Aorta (tissue), 5 donors: ENCODE measurements at regions of chr16 and their contacts with region 1.

Region 1: DNA sequence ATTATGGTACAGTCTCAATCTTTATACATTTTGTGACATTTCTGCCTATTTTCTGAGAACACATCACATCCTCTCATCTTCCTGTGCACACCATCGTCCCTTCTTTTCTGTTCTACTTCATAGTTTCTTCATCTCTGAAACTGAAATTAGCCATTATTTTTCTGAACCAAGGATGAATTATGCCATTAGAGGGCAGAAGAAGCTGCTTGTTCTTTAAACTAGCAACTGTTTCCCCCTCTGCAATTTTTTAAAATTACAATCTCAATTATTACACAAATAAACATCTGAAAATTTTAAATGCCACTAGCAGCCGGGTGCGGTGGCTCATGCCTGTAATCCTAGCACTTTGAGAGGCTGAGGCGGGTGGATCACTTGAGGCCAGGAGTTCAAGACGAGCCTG is 41.3 kb downstream of the RBBP6 start:
- DNase-seq: no peak
- ATAC-seq: no peak
- H3K4me3 ChIP-seq: no peak overlapping the region
- H3K27ac ChIP-seq: no peak overlapping the region
- H3K4me1 ChIP-seq: no peaks in the 10 kb centered on the region
- H3K27me3 ChIP-seq: no peaks in the 10 kb centered on the region

Region 2: DNA sequence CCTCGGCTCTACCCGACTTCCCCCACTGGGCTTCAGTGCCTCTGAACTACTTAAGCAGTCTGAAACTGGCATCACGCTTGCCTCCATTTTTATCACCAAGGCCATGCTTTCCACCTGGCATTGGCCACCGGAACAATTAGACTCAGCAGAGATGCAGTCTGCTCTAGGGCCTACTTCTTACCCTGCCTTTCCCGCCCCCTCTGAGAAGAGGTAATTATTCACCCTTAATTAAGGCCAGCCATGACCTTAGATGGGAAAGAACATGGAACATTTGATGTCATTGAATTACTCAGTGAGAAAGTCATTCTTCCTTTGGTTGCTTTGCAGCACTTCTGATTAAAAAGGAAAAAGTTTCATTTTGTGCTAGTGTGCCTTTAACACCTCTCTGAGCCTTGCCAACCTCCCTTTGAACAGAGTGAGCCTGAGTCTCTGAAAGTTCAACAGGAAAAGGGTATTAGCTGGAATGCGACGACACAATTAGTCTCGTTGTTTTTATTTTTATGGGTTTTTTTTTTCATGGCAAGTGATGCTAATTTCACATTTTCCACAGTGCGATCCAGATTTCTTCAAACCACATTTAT is 87.9 kb after region 1 on chr16:
- intact Hi-C with region 1: no loop called
- DNase-seq: peak; percentile 74 to 82
- ATAC-seq: peak; percentile 80
- H3K4me3 ChIP-seq: no peak overlapping the region
- H3K27ac ChIP-seq: peak overlapping the region; percentile 85 to 93
- H3K4me1 ChIP-seq: peaks cover 0 to 2% of the 10 kb centered on the region in 2 donors
- H3K27me3 ChIP-seq: no peaks in the 10 kb centered on the region

Region 3: DNA sequence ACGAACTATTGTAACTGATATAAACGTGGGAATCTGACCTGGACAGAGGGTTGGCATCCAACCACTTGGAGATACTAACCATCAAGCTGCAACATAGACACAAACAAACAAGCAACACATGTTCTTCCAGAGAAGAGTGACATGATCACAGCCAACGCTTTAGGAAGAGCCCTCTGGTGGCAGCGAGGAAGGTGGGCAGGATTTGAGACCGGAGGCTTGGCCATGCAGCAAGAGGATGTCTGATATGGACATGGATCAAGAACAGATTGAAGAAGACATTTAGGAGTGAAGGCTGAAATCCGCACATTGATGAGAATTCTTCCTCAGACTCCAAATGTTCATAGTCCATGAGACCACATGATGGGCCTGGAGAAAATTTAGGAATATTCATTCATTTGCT is 108.5 kb after region 1 on chr16:
- intact Hi-C with region 1: loop called in 1 of 2 experiments (anchors 5 kb)
- DNase-seq: no peak
- ATAC-seq: no peak
- H3K4me3 ChIP-seq: no peak overlapping the region
- H3K27ac ChIP-seq: no peak overlapping the region
- H3K4me1 ChIP-seq: peaks cover 0 to 2% of the 10 kb centered on the region in 2 donors
- H3K27me3 ChIP-seq: no peaks in the 10 kb centered on the region

Region 4: DNA sequence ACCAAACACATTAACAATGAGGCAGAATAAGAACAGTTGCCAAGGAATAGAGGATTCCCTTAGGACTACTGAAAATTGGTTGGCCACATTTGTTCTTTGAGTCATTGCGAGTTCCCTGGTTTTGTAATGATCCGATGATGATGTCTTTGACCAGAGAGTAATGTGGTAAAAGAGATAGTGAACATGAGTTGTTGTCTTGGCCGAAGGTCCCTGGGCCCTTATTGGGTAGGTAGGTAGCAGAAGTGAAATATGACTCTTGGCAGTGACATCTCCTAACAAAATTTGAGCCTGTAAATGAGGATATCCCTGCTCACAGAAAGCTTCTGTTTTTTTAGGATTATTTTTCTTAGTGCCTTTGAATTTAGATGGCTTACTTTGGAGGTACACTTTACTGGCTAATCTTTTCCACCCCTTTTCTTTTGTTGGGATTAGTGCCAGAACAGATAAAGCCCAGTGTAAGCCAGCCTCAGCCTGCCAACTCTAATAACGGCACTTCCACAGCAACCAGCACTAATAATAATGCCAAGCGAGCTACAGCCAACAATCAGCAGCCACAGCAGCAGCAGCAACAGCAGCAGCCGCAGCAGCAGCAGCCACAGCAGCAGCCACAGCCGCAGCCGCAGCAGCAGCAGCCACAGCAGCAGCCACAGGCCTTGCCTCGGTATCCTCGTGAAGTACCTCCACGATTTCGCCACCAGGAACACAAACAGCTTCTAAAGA is 196.0 kb after region 1 on chr16:
- intact Hi-C with region 1: loop called in 1 of 2 experiments (anchors 5 kb)
- DNase-seq: peak in 1 of 2 donors; percentile 55
- ATAC-seq: peak; percentile 78
- H3K4me3 ChIP-seq: no peak overlapping the region
- H3K27ac ChIP-seq: peak overlapping the region; percentile 39 to 77
- H3K4me1 ChIP-seq: peaks cover 2 to 26% of the 10 kb centered on the region in 2 donors
- H3K27me3 ChIP-seq: no peaks in the 10 kb centered on the region